K562 (cell line): ENCODE measurements at regions of chr1 and their contacts with region 1.

Region 1: DNA sequence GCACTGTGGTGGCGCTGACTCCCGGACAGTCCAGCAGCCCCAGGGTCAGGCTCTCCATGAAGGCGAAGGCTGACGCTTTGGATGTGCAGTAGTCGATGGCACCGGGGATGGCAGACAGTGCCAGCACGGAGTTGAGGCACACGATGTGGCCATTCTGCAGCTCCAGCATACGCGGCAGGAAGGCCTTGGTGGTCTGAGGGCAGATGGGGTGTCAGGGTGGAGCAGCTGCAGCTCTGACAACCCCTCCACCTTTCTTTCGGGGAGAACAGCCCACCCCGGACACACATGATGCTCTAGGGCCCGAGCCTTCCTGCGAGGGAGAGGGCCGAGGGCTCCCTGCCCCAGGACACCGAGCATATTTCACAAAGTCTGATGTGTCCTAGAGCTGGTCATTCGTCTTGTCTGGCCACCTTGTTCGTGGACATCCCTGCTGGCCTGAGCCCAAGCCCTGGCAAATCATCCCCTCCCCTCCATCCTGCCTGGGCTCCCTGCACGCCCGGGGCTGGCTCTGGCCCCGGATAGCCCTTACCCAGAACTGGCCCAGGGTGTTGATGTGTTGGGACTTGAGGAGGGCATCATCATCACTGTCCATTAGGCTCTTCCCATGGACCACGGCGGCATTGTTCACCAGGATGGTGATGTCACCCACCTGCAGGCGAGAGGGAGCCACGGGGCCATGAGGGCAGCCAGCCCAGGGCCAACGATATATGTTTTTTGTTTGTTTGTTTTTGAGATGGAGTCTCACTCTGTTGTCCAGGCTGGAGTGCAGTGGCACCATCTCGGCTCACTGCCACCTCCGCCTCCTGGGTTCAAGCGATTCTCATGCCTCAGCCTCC is 39.0 kb downstream of the DHRS3 start:
- DNase-seq: no peak
- ATAC-seq: no peak
- H3K4me3 ChIP-seq: no peak overlapping the region
- H3K27ac ChIP-seq: no peak overlapping the region
- H3K4me1 ChIP-seq: no peaks in the 10 kb centered on the region
- H3K27me3 ChIP-seq: no peaks in the 10 kb centered on the region; a peak in 1 of 5 replicates
- CTCF ChIP-seq: no peak
- EP300 ChIP-seq: no peak
- POLR2A ChIP-seq: no peak
- RAD21 ChIP-seq: no peak

Region 2: GRCh38 chr1:12591267-12591938 is 12.4 kb after region 1 on chr1:
- CTCF ChIA-PET with region 1: no interaction called
- POLR2A ChIA-PET with region 1: interaction called, 15 read pairs
- in situ Hi-C with region 1: no loop called
- intact Hi-C with region 1: no loop called
- DNase-seq: no peak
- ATAC-seq: no peak
- H3K4me3 ChIP-seq: no peak overlapping the region
- H3K27ac ChIP-seq: peak overlapping the region; percentile 19; the same call in 1 of the 3 replicates
- H3K4me1 ChIP-seq: peaks cover 6 to 22% of the 10 kb centered on the region in 2 experiments; a peak in 4 of 5 replicates
- H3K27me3 ChIP-seq: no peaks in the 10 kb centered on the region
- CTCF ChIP-seq: no peak
- EP300 ChIP-seq: no peak
- POLR2A ChIP-seq: no peak
- RAD21 ChIP-seq: no peak

Region 3: DNA sequence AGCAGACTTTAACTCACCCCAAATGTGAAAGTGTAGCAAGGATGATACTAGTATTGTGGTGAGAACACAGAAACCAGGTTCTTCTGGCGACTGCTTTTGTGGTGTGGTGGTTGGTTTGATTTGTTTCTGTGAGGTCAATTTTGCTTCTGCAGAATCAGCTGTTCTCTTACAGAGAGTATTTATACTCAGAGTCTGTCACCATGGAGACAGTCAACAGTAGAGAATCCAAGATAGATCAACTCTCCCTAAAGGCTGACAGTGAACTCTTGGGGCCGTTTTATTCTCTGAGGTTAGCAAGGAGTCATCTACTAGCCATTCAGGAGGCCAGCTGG is 167.0 kb after region 1 on chr1 and contains the start of gene CFAP107:
- CTCF ChIA-PET with region 1: no interaction called
- POLR2A ChIA-PET with region 1: no interaction called
- in situ Hi-C with region 1: no loop called
- intact Hi-C with region 1: no loop called
- DNase-seq: no peak
- ATAC-seq: peak; percentile 65
- H3K4me3 ChIP-seq: no peak within 1 kb of the TSS
- H3K27ac ChIP-seq: no peak within 1 kb of the TSS; the same call in 2 of the 3 replicates
- H3K4me1 ChIP-seq: no peaks in the 10 kb centered on the region; a peak in 1 of 5 replicates
- H3K27me3 ChIP-seq: no peaks in the 10 kb centered on the region
- CTCF ChIP-seq: no peak
- EP300 ChIP-seq: peak; percentile 67; the same call in 1 of the 2 replicates
- POLR2A ChIP-seq: no peak
- RAD21 ChIP-seq: no peak
- polyA plus RNA-seq, gene CFAP107: 0.03 TPM in 1 of 2 experiments, not detected in the other